ENCODE measurements at regions of chr15 and their contacts with region 1.

Region 1: GRCh38 chr15:84981054-84981710 is 474 bp upstream of the PDE8A start:
- DNase-seq: peak; percentile 87 to 97
- H3K4me3 ChIP-seq: peak overlapping the region; percentile 69
- H3K27ac ChIP-seq: peak overlapping the region; percentile 63
- H3K4me1 ChIP-seq: peaks cover 29% of the 10 kb centered on the region
- H3K27me3 ChIP-seq: no peaks in the 10 kb centered on the region
- CTCF ChIP-seq: no peak; the same call in 1 of the 2 replicates

Region 2: GRCh38 chr15:84600851-84601838 is 380.0 kb before region 1 on chr15 and contains the start of gene ZSCAN2:
- CTCF ChIA-PET with region 1: no interaction called
- POLR2A ChIA-PET with region 1: no interaction called
- intact Hi-C with region 1: loop called (anchors 5 kb)
- DNase-seq: peak; percentile 87 to 94
- H3K4me3 ChIP-seq: peak within 1 kb of the TSS; percentile 88
- H3K27ac ChIP-seq: peak within 1 kb of the TSS; percentile 24; the same call in 1 of the 2 replicates
- H3K4me1 ChIP-seq: peaks cover 6% of the 10 kb centered on the region
- H3K27me3 ChIP-seq: no peaks in the 10 kb centered on the region
- CTCF ChIP-seq: no peak
- total RNA-seq, gene ZSCAN2: 9.7 and 11.3 TPM in 2 replicates

Region 3: DNA sequence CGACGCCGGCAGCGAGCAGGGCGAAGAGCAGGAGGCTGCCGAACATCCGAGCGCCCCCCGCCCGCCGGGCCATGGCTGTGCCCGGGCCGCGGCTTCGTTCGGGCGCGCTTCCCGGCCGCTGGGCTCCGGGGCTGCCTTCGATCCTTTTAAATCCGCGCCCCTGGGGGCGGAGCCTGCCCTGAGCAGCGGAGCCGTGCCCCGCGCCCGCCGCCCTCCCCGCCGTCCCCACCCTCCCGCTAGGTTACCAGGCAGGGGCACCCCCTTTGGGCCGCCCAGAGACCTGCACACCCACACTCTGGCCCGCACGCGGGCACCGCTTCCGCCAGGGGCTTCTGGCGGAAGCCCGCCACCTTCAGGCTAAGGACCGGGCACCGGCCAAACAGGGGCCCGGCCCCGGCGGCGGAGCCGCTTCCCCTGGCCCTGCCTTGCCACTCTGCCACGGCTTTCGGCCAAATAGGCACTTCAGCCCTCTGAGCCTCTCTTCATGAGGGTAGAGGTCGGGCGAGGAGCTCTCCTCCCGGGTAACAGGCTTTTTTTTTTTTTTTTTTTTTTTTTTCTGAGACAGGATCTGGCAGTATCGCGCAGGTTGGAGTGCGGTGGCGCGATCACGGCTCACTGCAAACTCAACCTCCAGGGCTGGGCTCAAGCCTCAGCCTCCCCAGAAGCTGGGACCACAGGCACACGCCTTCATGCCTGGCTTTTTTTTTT is 322.9 kb before region 1 on chr15 and contains the start of gene NMB:
- CTCF ChIA-PET with region 1: interaction called, 13 read pairs
- POLR2A ChIA-PET with region 1: no interaction called
- intact Hi-C with region 1: no loop called
- DNase-seq: peak; percentile 70 to 88
- H3K4me3 ChIP-seq: peak within 1 kb of the TSS; percentile 70
- H3K27ac ChIP-seq: peak within 1 kb of the TSS; percentile 83
- H3K4me1 ChIP-seq: peaks cover 23% of the 10 kb centered on the region
- H3K27me3 ChIP-seq: no peaks in the 10 kb centered on the region
- CTCF ChIP-seq: peak; percentile 73
- total RNA-seq, gene NMB: 66.7 and 77.1 TPM in 2 replicates

Region 4: GRCh38 chr15:84915011-84915958 is 65.9 kb before region 1 on chr15:
- CTCF ChIA-PET with region 1: interaction called, 4 read pairs
- POLR2A ChIA-PET with region 1: no interaction called
- intact Hi-C with region 1: loop called (anchors 1 kb)
- DNase-seq: peak; percentile 95
- H3K4me3 ChIP-seq: no peak overlapping the region
- H3K27ac ChIP-seq: peak overlapping the region; percentile 99
- H3K4me1 ChIP-seq: peaks cover 62% of the 10 kb centered on the region
- H3K27me3 ChIP-seq: no peaks in the 10 kb centered on the region
- CTCF ChIP-seq: no peak

Region 5: DNA sequence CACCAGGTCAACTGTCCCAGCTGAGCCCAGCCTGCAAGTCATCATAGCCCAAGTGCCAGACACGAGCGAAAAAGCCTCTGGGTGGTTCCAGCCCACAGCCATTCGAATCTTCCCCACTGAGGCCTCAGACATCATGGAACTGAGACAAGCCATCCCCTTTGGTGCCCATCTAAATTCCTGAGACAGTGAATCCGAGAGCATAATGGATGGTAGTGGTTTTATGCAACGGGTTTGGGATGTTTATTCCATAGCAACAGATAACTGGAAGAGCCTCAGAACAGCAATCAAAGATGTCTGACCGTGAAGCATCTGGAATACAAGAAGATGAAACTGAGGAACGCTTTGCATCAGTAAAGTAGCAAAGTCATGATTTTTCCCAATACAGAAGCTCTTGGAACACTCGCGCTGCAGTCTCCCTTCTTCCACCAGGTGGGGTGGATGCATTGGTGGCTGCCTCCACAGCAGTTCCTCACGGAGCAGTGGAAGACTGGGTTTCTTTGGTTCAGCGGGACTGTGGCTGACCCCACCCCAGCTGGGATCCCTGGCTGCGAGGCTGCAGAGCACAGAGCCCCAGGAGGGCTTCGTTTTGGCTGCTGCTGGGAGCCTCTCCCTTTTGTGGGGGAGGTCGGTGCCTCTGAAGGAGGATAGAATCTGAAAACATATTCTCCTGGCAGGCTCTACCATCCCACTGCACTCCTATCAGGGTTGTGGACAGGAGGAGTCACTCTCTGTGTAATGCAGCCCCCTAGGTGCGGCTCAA is 25.9 kb before region 1 on chr15:
- CTCF ChIA-PET with region 1: interaction called, 10 read pairs
- POLR2A ChIA-PET with region 1: no interaction called
- intact Hi-C with region 1: loop called (anchors 2 kb)
- DNase-seq: peak; percentile 54 to 60
- H3K4me3 ChIP-seq: no peak overlapping the region
- H3K27ac ChIP-seq: no peak overlapping the region
- H3K4me1 ChIP-seq: peaks cover 10% of the 10 kb centered on the region
- H3K27me3 ChIP-seq: no peaks in the 10 kb centered on the region
- CTCF ChIP-seq: peak; percentile 76

Region 6: GRCh38 chr15:84962969-84963368 is 18.2 kb before region 1 on chr15:
- CTCF ChIA-PET with region 1: no interaction called
- POLR2A ChIA-PET with region 1: interaction called, 4 read pairs
- intact Hi-C with region 1: loop called (anchors 1 kb)
- DNase-seq: peak; percentile 71
- H3K4me3 ChIP-seq: no peak overlapping the region
- H3K27ac ChIP-seq: peak overlapping the region; percentile 45
- H3K4me1 ChIP-seq: peaks cover 43% of the 10 kb centered on the region
- H3K27me3 ChIP-seq: no peaks in the 10 kb centered on the region
- CTCF ChIP-seq: no peak

Region 7: DNA sequence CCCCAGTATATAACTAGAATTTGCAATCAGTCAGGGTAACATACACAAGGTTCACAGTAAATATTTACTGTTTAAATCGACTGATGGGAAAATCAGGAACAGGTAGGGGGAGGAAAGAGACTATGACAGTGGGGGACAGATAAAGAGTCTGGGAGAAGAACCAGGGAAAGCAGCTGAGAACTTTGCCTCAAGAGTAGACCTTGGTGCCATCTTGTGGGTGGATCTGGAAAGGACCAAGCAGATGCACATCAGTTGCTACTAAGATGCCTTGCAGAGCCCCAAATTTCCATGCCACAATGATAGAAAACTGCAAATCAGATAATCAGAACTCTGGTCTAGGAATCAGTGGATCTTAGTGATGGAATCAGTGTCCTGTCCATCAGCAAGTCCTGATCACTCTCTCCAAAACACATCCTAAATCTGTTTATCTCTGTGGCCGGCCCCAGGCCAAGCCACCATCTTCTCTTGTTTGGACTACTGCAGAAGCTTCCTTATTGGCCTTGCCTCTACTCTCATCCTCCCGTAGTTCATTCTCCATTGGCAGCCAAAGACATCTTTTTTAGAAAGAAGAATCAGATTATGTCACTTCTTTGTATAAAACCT is 63.2 kb after region 1 on chr15:
- CTCF ChIA-PET with region 1: no interaction called
- POLR2A ChIA-PET with region 1: interaction called, 3 read pairs
- intact Hi-C with region 1: loop called (anchors 1 kb)
- DNase-seq: peak in 1 of 2 experiments; percentile 47
- H3K4me3 ChIP-seq: no peak overlapping the region
- H3K27ac ChIP-seq: no peak overlapping the region
- H3K4me1 ChIP-seq: peaks cover 44% of the 10 kb centered on the region
- H3K27me3 ChIP-seq: no peaks in the 10 kb centered on the region
- CTCF ChIP-seq: peak; percentile 64